Naive thymus-derived CD8-positive, alpha-beta T cell (primary cell): ENCODE measurements at regions of chr3 and their contacts with region 1.

Region 1: DNA sequence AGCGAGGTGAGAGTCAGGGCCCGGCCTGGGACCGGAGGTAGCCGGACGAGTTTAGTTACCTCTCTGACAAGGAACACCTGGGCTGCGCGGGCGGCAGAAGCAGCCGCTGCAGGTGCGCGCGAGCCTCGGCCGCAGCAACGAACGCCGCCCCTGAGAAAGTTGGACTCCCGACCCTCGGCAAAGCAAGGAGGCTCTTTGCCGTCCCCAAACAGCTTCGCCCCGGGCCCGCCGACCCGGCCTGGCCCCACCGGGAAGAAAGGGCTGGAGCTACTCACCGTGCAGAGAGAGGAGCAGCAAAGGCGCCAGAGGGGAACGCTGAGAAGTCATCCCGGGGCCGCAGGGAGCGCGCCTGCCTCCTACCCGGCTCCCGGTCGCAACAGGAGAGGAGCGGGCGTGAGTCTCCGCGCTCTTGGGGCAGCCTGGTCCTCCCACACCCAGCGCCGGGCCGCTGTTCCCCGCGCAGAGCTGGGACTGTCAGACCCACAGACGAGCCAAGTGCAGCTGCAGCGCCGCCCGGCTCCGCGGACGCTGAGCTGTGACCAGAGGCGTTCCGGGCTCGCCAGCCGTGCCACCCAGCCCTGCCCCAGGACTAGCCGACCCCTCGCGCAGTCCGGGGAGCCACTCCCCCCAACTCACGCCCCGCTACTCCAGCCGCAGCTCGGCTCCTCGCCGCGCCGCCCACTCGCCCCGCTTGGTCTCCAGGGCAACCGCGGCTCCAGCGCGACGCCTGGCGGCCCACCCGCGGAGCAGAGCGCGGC is at the start of gene IGSF11:
- DNase-seq: peak; percentile 58 to 79 (median 72)
- ATAC-seq: peak; percentile 91 to 92
- H3K4me3 Mint-ChIP-seq: peak within 1 kb of the TSS; percentile 79 to 97 (median 91)
- H3K27ac Mint-ChIP-seq: peak within 1 kb of the TSS in 6 of 10 donors; percentile 22 to 92 (median 64)
- H3K4me1 Mint-ChIP-seq: peaks cover 4 to 13% (median 9%) of the 10 kb centered on the region in 4 donors
- H3K27me3 Mint-ChIP-seq: peaks cover 10 to 41% (median 24%) of the 10 kb centered on the region in 5 donors
- polyA plus RNA-seq, gene IGSF11: 0.70 to 1.2 TPM in 2 of 3 donors, not detected in the other

Region 2: GRCh38 chr3:118884748-118885206 is 149.7 kb before region 1 on chr3:
- POLR2A ChIA-PET with region 1: interaction called, 20 read pairs
- DNase-seq: peak; percentile 53 to 89 (median 72)
- ATAC-seq: peak; percentile 86 to 90
- H3K4me3 Mint-ChIP-seq: peak overlapping the region in 7 of 10 donors; percentile 9 to 56 (median 41)
- H3K27ac Mint-ChIP-seq: no peak overlapping the region
- H3K4me1 Mint-ChIP-seq: peaks cover 0 to 8% (median 6%) of the 10 kb centered on the region in 4 donors
- H3K27me3 Mint-ChIP-seq: peaks cover 5 to 39% (median 17%) of the 10 kb centered on the region in 5 donors

Region 3: DNA sequence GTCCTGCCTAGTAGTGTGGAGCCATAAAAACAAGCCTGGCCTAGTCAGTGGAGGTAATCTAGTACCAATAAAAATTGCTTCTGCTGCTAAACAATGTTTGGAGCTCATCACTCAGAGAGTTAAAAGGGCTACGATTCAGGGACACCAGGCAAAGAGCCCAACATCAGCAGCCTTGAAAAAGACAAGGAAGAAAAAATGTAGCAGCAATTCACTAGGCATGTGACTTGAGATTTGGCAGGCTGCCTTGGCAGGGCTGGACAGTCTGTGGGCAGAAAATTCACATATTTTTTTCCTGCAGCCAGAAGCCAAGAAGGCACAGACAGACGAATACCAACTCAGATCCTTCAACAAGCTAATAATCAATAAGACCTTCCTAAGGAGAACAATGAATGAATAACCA is 47.0 kb before region 1 on chr3:
- POLR2A ChIA-PET with region 1: no interaction called
- DNase-seq: no peak
- ATAC-seq: no peak
- H3K4me3 Mint-ChIP-seq: no peak overlapping the region
- H3K27ac Mint-ChIP-seq: no peak overlapping the region
- H3K4me1 Mint-ChIP-seq: peaks cover 0 to 12% (median 5%) of the 10 kb centered on the region in 4 donors
- H3K27me3 Mint-ChIP-seq: peaks cover 0 to 2% (median 0%) of the 10 kb centered on the region in 5 donors